Left lung (tissue), 14 donors: ENCODE measurements at regions of chr19 and their contacts with region 1.

Region 1: GRCh38 chr19:3665681-3666544 is 34.4 kb downstream of the PIP5K1C start:
- DNase-seq: peak in 2 of 4 donors; percentile 66 to 93
- ATAC-seq: peak; percentile 83
- H3K4me3 ChIP-seq: no peak overlapping the region
- H3K27ac ChIP-seq: no peak overlapping the region
- H3K4me1 ChIP-seq: peaks cover 6 to 22% of the 10 kb centered on the region in 2 donors
- H3K27me3 ChIP-seq: peaks cover 0 to 4% of the 10 kb centered on the region in 2 donors
- CTCF ChIP-seq: peak; percentile 93 to 96

Region 2: DNA sequence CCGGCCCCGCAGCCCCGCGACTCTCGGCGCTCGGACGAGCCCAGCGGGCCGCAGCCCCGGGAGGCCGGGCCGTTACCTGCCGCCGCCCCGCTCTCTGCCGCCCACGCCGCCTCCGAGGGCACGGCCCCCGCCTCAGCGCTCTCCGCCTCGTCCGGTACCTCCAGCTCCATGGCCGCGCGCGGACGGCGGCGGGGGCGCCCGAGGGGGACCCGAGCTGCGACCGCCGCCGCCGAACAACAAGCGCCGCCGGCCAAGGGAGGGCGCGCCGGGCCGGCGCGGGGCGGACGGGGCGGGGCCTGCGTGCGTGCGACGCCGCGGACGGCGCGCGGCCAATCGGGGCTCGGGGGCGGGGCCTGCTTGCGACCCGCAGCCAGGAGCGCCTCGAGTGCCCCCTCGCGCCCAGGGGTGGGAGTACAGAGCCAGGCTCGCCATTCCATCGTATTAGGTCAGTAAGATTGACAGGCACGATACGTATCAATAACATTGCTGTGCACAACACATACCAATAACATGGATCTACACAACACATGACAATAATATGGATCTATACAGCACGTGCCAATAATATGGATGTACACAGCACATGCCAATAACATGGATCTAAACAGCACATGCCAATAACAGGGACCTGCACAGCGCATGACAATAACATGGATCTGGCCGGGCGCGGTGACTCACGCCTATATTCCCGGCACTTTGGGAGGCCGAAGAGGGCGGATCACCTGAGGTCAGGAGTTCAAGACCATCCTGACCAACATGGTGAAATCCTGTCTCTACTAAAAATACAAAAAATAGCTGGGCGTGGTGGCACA is 34.5 kb after region 1 on chr19 and contains the start of gene PIP5K1C:
- intact Hi-C with region 1: loop called (anchors 5 kb)
- DNase-seq: peak; percentile 88 to 98 (median 91)
- ATAC-seq: peak; percentile 99
- H3K4me3 ChIP-seq: peak within 1 kb of the TSS; percentile 61 to 86
- H3K27ac ChIP-seq: peak within 1 kb of the TSS; percentile 76 to 80
- H3K4me1 ChIP-seq: peaks cover 0 to 21% of the 10 kb centered on the region in 2 donors
- H3K27me3 ChIP-seq: peaks cover 0 to under 1% of the 10 kb centered on the region in 2 donors
- CTCF ChIP-seq: peak; percentile 73 to 80
- polyA plus RNA-seq, gene PIP5K1C: 20.2 to 31.0 (median 25.5) TPM

Region 3: GRCh38 chr19:3771906-3772455 is 106.1 kb after region 1 on chr19 and contains the start of gene RAX2:
- intact Hi-C with region 1: no loop called
- DNase-seq: peak in 1 of 4 donors; percentile 57
- ATAC-seq: no peak
- H3K4me3 ChIP-seq: no peak within 1 kb of the TSS
- H3K27ac ChIP-seq: no peak within 1 kb of the TSS
- H3K4me1 ChIP-seq: no peaks in the 10 kb centered on the region
- H3K27me3 ChIP-seq: no peaks in the 10 kb centered on the region
- CTCF ChIP-seq: no peak
- polyA plus RNA-seq, gene RAX2: 0.08 TPM in 1 of 6 donors, not detected in the others